Naive thymus-derived CD4-positive, alpha-beta T cell (primary cell): ENCODE measurements at regions of chrX and their contacts with region 1.

Region 1: DNA sequence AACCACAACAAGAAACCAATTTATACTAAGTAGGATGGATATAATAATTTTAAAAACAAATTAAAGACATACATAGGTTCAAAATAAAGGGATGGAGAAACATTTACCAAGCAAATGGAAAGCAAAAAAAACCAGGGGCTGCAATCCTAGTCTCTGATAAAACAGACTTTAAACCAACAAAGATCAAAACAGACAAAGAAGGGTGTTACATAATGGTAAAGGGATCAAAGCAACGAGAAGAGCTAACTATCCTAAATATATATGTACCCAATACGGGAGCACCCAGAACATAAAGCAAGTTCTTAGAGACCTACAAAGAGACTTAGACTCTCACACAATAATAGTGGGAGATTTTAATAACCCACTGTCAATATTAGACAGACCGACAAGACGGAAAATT is 66.6 kb downstream of the ATRX start:
- DNase-seq: no peak
- ATAC-seq: no peak
- H3K4me3 ChIP-seq: no peak overlapping the region
- H3K4me3 Mint-ChIP-seq: peak overlapping the region in 4 of 10 donors; percentile 51 to 79 (median 60)
- H3K27ac ChIP-seq: no peak overlapping the region
- H3K27ac Mint-ChIP-seq: peak overlapping the region in 8 of 9 donors; percentile 46 to 85 (median 63)
- H3K4me1 ChIP-seq: peaks cover 0 to 8% of the 10 kb centered on the region in 2 donors
- H3K4me1 Mint-ChIP-seq: peaks cover 17 to 54% (median 43%) of the 10 kb centered on the region in 7 donors
- H3K27me3 ChIP-seq: no peaks in the 10 kb centered on the region
- H3K27me3 Mint-ChIP-seq: no peaks in the 10 kb centered on the region

Region 2: DNA sequence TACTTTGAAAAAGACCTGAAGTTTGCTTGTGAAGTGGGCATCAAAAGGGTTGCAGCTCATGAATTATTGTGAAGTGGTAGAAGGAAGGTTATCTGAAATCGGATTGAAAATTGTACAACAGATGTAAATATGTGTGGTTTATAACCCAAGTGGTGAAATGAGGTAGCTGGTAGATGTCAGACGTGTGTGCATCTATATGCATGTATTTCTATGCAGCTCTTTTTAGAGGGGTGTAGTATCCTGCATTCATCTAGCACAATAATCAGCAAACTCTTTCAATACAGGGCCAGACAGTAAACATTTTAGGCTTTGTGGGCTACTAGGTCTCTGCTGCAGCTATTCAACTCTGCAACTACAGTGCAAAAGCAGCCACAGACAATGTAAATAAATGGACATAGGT is 57.3 kb after region 1 on chrX:
- CTCF ChIA-PET with region 1: no interaction called
- POLR2A ChIA-PET with region 1: no interaction called
- intact Hi-C with region 1: loop called in 1 of 2 experiments (anchors 10 kb)
- DNase-seq: no peak
- ATAC-seq: no peak
- H3K4me3 ChIP-seq: no peak overlapping the region
- H3K4me3 Mint-ChIP-seq: peak overlapping the region in 3 of 10 donors; percentile 11 to 17 (median 13)
- H3K27ac ChIP-seq: no peak overlapping the region
- H3K27ac Mint-ChIP-seq: no peak overlapping the region
- H3K4me1 ChIP-seq: peaks cover 0 to 4% of the 10 kb centered on the region in 2 donors
- H3K4me1 Mint-ChIP-seq: peaks cover 12 to 54% (median 37%) of the 10 kb centered on the region in 7 donors
- H3K27me3 ChIP-seq: no peaks in the 10 kb centered on the region
- H3K27me3 Mint-ChIP-seq: no peaks in the 10 kb centered on the region